ENCODE measurements at regions of chr16 and their contacts with region 1.

Region 1: DNA sequence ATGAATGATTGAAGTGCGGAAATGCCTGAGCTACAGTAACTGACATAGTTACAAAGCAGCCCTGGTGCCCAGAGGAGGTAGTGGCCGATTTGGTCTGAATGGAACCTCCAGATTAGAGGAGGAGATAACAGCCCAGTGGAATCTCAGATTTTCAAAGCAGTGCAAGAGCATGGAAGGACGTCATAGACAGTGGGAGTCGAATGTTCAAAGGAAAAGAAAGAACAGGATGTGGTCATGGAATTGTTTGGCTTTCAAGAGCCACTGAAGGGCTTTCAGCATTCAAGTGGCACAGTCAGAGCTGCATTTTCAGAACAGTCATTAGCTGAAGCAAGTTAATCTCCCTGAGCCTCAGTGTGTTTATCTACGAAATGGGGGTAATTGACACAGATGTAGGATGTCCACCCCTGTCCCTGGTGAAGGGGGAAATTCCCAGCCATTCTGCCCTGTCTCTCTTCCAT is 104.6 kb upstream of the CACNG3 start:
- DNase-seq: no peak
- ATAC-seq: no peak
- H3K4me3 ChIP-seq: no peak overlapping the region
- H3K27ac ChIP-seq: no peak overlapping the region
- H3K4me1 ChIP-seq: peaks cover 0 to 7% (median under 1%) of the 10 kb centered on the region in 9 donors
- H3K27me3 ChIP-seq: no peaks in the 10 kb centered on the region
- CTCF ChIP-seq: no peak

Region 2: DNA sequence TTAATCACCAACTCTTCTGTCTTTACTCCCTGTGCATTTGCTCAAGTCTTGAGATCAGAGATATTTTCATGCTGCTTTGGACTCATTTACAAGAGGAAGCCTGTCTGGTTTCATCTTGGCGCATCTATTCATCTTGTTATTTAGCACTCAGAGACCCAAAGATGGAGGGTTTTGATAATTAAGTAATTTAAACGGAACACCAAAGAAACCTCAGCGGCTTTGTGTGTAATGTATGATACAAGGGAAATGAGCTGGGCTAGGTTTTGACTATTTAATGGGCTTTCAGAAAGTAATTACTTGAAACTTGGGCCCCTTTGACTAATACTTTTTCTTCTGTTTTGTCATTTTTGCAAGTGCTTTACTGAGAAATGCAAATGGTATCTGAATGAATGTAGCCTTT is 38.4 kb after region 1 on chr16:
- intact Hi-C with region 1: no loop called
- DNase-seq: no peak
- ATAC-seq: no peak
- H3K4me3 ChIP-seq: no peak overlapping the region
- H3K27ac ChIP-seq: no peak overlapping the region
- H3K4me1 ChIP-seq: no peaks in the 10 kb centered on the region
- H3K27me3 ChIP-seq: no peaks in the 10 kb centered on the region
- CTCF ChIP-seq: no peak

Region 3: DNA sequence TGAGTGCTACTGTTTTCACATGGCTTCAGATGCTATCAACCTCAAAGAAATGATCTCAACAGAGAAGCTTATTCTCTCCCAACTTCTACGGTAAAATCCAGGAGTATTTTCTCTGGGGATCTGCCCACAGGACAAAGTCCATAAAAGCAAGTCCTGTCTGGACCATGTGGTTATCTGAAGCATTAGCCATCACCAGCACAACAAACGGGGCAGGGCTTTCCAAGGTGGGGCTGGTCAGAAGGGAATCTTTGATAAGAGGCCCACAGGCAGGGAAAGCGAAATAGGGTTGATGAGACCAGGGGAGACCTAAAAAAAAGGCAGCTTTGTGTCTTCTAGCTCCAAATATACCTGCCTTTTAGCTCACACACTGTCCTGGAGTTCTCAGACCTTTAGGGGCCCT is 66.0 kb after region 1 on chr16:
- intact Hi-C with region 1: loop called in 1 of 10 experiments (anchors 10 kb)
- DNase-seq: no peak
- ATAC-seq: no peak
- H3K4me3 ChIP-seq: no peak overlapping the region
- H3K27ac ChIP-seq: no peak overlapping the region
- H3K4me1 ChIP-seq: peaks cover 0 to 4% (median 0%) of the 10 kb centered on the region in 9 donors
- H3K27me3 ChIP-seq: no peaks in the 10 kb centered on the region
- CTCF ChIP-seq: no peak

Measured in heart right ventricle (tissue), 16 donors.